Transverse colon (tissue), 4 donors: ENCODE measurements at regions of chr18 and their contacts with region 1.

Region 1: DNA sequence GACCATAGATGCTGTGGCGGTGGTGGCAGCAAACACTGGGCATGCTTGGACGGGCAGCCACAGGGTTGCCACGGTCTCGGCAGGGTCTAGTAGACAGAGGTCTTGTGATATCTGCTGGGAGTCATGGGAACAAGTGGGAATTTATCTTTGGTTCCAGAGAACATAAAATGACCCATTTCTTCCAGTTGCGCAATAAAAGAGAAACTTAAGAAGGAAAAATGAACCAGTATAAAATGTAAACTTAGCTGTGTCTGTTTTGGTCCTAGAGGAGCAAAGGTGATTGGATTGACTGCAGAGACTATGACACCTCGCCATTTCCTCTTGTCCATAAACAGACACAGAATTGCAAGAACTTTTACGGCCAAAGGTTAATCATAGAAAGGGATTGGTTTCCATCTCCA is 132.6 kb upstream of the RBBP8 start:
- DNase-seq: no peak
- H3K4me3 ChIP-seq: no peak overlapping the region
- H3K27ac ChIP-seq: peak overlapping the region in 3 of 4 donors; percentile 36 to 59 (median 46)
- H3K4me1 ChIP-seq: peaks cover 0 to 23% (median 9%) of the 10 kb centered on the region in 4 donors
- H3K27me3 ChIP-seq: no peaks in the 10 kb centered on the region
- CTCF ChIP-seq: no peak
- EP300 ChIP-seq: no peak
- POLR2A ChIP-seq: no peak

Region 2: DNA sequence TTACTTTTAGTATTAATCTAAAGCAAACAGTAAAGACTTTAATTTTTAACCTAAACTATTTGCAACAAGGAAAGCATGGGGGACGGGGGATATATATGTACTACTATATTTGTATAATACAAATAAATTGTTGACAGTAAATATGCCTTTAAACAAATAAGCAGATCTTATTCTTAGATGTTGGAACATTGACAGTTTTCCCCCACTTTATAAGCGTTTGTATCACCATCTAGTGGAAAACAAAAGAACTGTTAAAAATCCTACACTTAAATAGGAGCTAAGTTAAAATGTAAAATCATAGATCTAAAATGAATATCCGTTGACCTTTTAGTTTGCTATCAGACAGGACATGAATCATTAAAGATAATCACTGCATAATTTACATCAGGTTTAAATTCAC is 182.6 kb after region 1 on chr18:
- in situ Hi-C with region 1: loop called in 2 of 4 experiments (anchors 10 kb)
- intact Hi-C with region 1: no loop called
- DNase-seq: no peak
- H3K4me3 ChIP-seq: no peak overlapping the region
- H3K27ac ChIP-seq: no peak overlapping the region
- H3K4me1 ChIP-seq: peaks cover 0 to 9% (median 1%) of the 10 kb centered on the region in 4 donors
- H3K27me3 ChIP-seq: no peaks in the 10 kb centered on the region
- CTCF ChIP-seq: peak; percentile 42 to 68 (median 51)
- EP300 ChIP-seq: no peak
- POLR2A ChIP-seq: no peak